ENCODE measurements at regions of chr9 and their contacts with region 1.

Region 1: GRCh38 chr9:114906908-114907571 is 23.4 kb downstream of the TNFSF8 start:
- DNase-seq: peak; percentile 78
- H3K4me3 ChIP-seq: no peak overlapping the region
- H3K27ac ChIP-seq: no peak overlapping the region
- H3K4me1 ChIP-seq: peaks cover 12% of the 10 kb centered on the region
- H3K27me3 ChIP-seq: no peaks in the 10 kb centered on the region
- CTCF ChIP-seq: peak; percentile 80 to 85
- POLR2A ChIP-seq: no peak

Region 2: DNA sequence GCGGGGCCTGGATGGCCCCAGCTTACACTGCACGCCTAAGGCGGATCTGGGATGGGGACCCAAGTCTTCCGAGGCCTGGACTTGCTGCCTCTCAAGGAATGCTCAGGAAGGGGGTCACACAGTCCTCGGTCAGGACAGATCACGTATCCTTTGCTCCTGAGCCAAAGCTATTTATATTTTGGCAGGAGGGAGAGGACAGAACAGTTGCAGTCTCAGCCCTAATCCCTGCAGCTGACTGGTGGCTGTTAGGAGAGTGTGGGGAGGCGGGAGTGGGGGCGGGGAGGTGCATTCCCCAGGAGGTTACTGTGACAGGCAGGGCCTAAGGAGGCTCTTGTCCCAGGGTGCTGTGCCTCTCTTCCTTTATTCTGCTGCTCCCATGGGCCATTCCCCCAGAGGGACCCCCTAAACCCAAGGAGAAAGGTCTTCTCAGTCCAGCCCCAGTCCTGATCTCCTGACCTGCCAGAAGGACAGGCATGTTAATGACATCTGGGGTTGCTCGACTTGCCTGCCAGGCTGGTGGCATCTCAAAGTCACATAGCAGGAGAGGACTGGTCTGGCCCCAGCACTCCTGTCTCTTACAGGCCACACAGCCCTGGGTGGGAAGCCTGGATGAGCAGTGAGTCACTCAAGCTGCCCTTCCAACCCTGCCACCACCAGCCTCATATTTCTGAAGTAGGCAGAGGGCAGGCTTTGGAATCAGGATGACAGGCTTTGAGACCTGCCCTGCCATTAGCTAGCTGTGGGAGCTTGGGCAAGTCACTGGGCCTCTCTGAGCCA is 699.8 kb before region 1 on chr9:
- CTCF ChIA-PET with region 1: no interaction called
- POLR2A ChIA-PET with region 1: no interaction called
- dilution Hi-C with region 1: no loop called
- intact Hi-C with region 1: no loop called
- DNase-seq: no peak
- H3K4me3 ChIP-seq: no peak overlapping the region
- H3K27ac ChIP-seq: no peak overlapping the region
- H3K4me1 ChIP-seq: no peaks in the 10 kb centered on the region
- H3K27me3 ChIP-seq: no peaks in the 10 kb centered on the region
- CTCF ChIP-seq: no peak
- POLR2A ChIP-seq: no peak

Region 3: DNA sequence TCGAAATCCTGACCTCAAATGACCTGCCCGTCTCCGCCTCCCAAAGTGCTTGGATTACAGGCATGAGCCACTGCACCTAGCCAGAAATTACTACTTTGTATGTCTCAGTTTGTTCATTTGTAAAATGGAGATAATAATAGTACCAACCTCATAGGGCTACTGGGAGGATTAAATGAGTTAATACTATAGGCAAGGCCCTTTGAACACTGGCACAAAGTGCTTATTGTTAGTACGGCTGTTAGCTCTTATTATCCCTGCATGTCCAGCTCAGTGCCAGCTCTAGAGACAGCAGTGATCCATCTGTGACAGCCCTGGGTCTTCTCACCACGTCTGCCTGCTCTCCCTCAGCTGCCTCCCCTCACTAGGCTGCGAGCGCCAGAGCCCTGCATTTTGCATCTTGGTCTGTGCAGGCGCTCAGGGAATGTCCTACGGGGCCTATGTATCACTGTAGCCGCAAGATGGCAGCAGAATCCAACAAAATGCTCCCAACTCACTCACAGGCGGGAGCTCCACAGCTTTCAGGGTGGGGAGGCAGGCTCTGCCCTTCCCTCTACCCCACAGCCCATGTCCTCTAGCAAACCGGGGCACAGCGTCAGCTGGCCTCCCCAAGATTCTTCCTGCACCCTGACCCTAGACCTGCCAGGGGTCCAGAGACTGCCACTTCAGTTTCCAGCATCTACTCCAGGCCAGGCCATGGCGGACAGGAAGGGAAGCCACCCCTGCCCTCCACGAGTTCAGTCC is 501.6 kb before region 1 on chr9:
- CTCF ChIA-PET with region 1: interaction called, 25 read pairs
- POLR2A ChIA-PET with region 1: no interaction called
- dilution Hi-C with region 1: no loop called
- intact Hi-C with region 1: loop called (anchors 1 kb)
- DNase-seq: peak; percentile 75
- H3K4me3 ChIP-seq: no peak overlapping the region
- H3K27ac ChIP-seq: no peak overlapping the region
- H3K4me1 ChIP-seq: no peaks in the 10 kb centered on the region
- H3K27me3 ChIP-seq: peaks cover 0 to 2% of the 10 kb centered on the region in 2 experiments
- CTCF ChIP-seq: peak; percentile 75 to 84
- POLR2A ChIP-seq: no peak

Region 4: DNA sequence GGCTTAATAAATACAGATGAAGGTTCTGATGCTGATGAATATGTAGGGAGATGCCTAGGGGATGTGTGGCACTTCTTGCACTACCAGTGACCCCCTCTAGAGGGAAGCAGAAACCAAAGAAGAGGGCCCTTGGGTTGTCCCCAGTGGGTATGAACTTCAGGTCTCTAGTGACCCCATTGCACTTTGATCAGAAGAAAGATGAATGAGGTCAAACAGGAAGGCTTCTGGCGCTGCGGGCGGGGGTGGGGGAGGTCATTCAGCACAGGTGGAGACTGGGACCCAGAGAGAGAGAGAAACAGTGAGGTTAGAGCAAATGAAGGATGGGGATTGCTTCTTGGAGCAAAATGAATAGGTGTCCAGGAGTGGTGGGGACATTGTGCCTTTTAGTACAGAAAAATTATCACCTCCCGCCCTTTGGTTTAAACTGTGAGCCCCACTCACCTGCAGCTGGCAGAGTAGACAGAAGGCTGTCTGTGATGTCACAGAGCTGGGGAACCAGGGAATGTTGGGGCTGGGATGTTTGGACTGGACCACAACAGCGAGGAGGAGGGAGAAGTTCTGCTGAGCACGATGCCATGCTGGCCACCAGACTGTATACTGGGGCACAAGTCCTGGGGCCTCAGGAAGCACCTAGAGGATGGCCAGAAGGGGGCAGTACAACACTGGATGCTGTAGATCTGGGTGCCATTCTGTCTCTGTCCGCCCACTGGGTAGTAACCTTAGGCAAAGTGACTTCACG is 225.3 kb before region 1 on chr9 and contains the start of gene TEX48:
- CTCF ChIA-PET with region 1: interaction called, 270 read pairs
- POLR2A ChIA-PET with region 1: no interaction called
- dilution Hi-C with region 1: no loop called
- intact Hi-C with region 1: loop called (anchors 1 kb)
- DNase-seq: peak; percentile 52
- H3K4me3 ChIP-seq: no peak within 1 kb of the TSS
- H3K27ac ChIP-seq: no peak within 1 kb of the TSS
- H3K4me1 ChIP-seq: peaks cover 23% of the 10 kb centered on the region
- H3K27me3 ChIP-seq: no peaks in the 10 kb centered on the region
- CTCF ChIP-seq: peak; percentile 67 to 78
- POLR2A ChIP-seq: no peak
- total RNA-seq, gene TEX48: not detected in 2 replicates

Region 5: DNA sequence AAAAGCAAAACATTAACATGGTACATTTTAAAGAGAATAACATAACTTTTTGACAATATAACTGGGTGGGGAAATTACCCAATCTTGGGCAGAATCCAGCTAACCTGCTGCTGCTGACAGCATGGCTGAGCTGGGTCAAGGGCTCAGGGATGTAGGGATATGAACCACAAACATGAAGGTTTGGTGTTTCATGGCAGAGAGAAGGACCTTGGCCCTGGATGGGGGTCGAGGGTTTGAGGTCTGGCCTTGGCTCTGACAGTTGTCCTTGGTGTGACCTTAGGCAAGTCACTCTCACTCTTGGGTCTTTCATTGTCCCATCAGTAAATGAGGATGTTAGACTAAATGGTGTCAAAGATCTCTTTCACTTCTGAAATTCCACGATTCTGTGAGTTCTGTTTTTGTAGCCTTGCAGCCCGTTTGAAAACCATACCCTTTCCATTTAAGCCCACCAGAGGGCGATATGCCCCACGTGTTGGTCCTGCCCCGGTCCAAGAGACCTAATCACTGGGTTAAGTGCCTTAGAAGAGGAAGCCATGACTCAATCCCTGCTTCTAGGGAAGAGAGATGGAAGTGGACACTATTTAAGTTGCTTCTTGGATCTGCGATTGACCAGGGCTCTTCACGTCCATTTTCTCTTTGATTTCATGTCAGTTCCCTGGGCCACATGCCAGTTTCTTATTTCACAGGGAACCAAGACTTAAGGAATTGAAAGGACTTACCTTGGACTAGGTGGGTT is 168.3 kb before region 1 on chr9:
- CTCF ChIA-PET with region 1: interaction called, 301 read pairs
- POLR2A ChIA-PET with region 1: no interaction called
- dilution Hi-C with region 1: no loop called
- intact Hi-C with region 1: loop called (anchors 1 kb)
- DNase-seq: peak; percentile 89
- H3K4me3 ChIP-seq: no peak overlapping the region
- H3K27ac ChIP-seq: peak overlapping the region; percentile 23
- H3K4me1 ChIP-seq: peaks cover 4% of the 10 kb centered on the region
- H3K27me3 ChIP-seq: no peaks in the 10 kb centered on the region
- CTCF ChIP-seq: peak; percentile 69 to 90
- POLR2A ChIP-seq: no peak

Region 6: DNA sequence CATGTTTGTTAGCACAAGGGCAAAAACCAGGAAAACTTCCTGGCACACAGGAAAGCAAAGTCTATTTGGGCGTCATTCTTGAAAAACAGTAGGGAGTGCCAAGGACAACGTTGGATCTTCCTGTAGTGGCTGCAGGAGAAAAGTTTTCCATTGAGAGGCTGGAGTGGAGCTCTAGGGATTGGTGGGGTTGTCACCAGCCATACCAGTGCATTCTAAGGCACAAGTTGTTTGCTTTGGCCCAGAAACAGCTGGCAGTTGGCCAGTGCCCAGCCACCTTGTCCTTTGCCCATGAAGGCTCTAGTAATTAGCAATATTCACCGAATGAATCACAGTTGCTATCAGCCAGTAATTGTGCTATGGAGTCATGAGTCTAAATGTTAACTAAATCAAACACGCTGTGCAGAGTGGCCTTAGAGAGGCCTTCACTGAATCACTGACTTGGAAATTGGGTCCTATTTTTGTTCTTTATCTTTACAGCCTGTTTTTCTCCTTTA is 127.6 kb before region 1 on chr9:
- CTCF ChIA-PET with region 1: interaction called, 15 read pairs
- POLR2A ChIA-PET with region 1: no interaction called
- dilution Hi-C with region 1: no loop called
- intact Hi-C with region 1: loop called (anchors 1 kb)
- DNase-seq: peak; percentile 100
- H3K4me3 ChIP-seq: no peak overlapping the region
- H3K27ac ChIP-seq: peak overlapping the region; percentile 86
- H3K4me1 ChIP-seq: peaks cover 31% of the 10 kb centered on the region
- H3K27me3 ChIP-seq: no peaks in the 10 kb centered on the region
- CTCF ChIP-seq: no peak
- POLR2A ChIP-seq: no peak

Region 7: GRCh38 chr9:114889802-114890251 is 17.2 kb before region 1 on chr9:
- CTCF ChIA-PET with region 1: interaction called, 81 read pairs
- POLR2A ChIA-PET with region 1: no interaction called
- dilution Hi-C with region 1: no loop called
- intact Hi-C with region 1: no loop called
- DNase-seq: no peak
- H3K4me3 ChIP-seq: no peak overlapping the region
- H3K27ac ChIP-seq: peak overlapping the region; percentile 53
- H3K4me1 ChIP-seq: peaks cover 25% of the 10 kb centered on the region
- H3K27me3 ChIP-seq: no peaks in the 10 kb centered on the region
- CTCF ChIP-seq: no peak
- POLR2A ChIP-seq: no peak

Region 8: GRCh38 chr9:115013998-115014397 is 107.0 kb after region 1 on chr9:
- CTCF ChIA-PET with region 1: interaction called, 9 read pairs
- POLR2A ChIA-PET with region 1: no interaction called
- dilution Hi-C with region 1: no loop called
- intact Hi-C with region 1: loop called (anchors 1 kb)
- DNase-seq: peak; percentile 47
- H3K4me3 ChIP-seq: no peak overlapping the region
- H3K27ac ChIP-seq: no peak overlapping the region
- H3K4me1 ChIP-seq: no peaks in the 10 kb centered on the region
- H3K27me3 ChIP-seq: peaks cover 3 to 5% of the 10 kb centered on the region in 2 experiments
- CTCF ChIP-seq: peak; percentile 62 to 72
- POLR2A ChIP-seq: no peak

Measured in endothelial cell of umbilical vein (primary cell).